ENCODE measurements at regions of chr2 and their contacts with region 1.

Region 1: DNA sequence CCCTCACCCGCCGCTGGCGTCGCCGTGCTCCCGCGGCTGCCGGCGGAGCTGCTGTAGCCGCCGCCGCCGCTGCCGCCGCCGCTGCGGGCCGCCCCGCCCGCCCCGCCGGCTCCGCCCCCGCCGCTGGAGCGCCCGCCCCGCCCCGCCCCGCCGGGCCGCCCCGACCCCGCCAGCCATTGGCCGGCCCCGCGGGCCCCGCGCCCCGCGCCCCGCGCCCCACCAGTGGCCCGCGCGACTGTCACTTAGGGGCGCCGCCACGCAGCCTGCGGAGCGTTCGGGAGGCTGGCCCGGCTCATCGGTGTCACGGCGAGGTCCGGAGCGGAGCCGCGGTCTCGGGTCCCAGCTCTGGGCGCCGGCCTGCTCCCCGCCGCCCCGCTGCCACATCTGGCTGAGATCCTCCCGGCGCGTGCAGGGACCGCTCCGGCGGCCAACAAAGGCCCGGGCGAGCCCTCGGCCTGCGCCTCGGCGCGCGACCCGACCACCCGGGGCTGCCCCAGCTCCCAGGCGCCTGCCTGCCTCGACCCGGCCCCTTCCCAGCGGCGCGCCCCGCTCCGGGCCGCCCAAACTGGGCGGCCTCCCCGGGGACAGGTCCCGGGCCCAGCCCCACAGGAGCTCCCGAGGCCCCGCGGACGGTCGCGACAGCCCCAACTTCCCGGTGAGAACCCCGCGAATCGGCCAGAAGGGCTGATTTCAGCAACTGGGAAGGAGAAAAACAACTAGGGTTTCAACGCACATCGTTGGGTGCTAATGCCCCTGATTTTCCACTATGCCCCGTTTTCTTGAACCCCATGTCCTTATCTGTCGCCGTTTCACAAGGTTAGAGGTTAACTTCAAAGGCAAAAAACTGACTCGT is at the start of gene MGAT4A:
- DNase-seq: peak; percentile 76
- H3K4me3 Mint-ChIP-seq: peak within 1 kb of the TSS; percentile 88
- H3K27ac Mint-ChIP-seq: peak within 1 kb of the TSS; percentile 93
- H3K4me1 Mint-ChIP-seq: peaks cover 71% of the 10 kb centered on the region
- H3K27me3 Mint-ChIP-seq: no peaks in the 10 kb centered on the region
- total RNA-seq, gene MGAT4A: 42.0 and 44.6 TPM in 2 replicates

Region 2: DNA sequence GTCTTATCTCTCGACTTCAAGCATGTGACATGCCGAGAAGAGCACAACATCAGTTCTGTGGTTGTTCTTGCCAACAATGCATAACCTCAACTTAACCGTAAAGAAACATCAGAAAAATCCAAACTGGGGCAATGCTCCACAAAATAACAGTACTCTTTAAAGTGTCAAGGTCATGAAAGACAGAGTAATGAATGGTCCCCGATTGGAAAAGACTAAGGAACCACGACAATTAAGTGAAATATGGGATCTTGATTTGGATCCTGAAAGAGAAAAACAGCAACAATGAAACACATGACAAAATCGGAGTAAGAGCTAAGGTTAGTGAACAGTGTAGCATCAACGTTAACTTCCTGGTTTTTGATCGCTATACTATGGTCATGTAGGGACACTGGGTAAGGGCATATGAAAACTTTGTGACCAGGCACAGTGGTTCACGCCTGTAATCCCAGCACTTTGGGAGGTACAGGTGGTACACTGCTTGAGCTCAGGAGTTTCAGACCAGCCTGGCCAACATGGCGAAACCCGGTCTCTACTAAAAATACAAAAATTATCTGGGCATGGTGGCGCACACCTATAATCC is 67.7 kb before region 1 on chr2:
- intact Hi-C with region 1: loop called (anchors 2 kb)
- DNase-seq: peak; percentile 30
- H3K4me3 Mint-ChIP-seq: peak overlapping the region; percentile 83
- H3K27ac Mint-ChIP-seq: peak overlapping the region; percentile 99
- H3K4me1 Mint-ChIP-seq: peaks cover 64% of the 10 kb centered on the region
- H3K27me3 Mint-ChIP-seq: no peaks in the 10 kb centered on the region

Measured in activated T-helper 2 cell treated with anti-CD3 and anti-CD28 coated beads, Interferon-gamma antibody, Interleukin-2, Interleukin-4, amounts not matched to agents 10 μg/mL and 5 μg/mL and 100 μg/mL, durations not matched to agents 14 hours and 24 hours and 36 hours (primary cell).